Activated T-helper 1 cell treated with anti-CD3 and anti-CD28 coated beads, Interleukin-12 subunit alpha, Interleukin-12 subunit beta, Interleukin-2, Interleukin-4 antibody, amounts not matched to agents 30 ng/mL and 10 ng/mL and 1 ng/mL, durations not matched to agents 14 hours and 24 hours and 36 hours (primary cell): ENCODE measurements at regions of chr15 and their contacts with region 1.

Region 1: GRCh38 chr15:78422571-78423340 is 15.3 kb upstream of the IREB2 start:
- DNase-seq: peak; percentile 32
- H3K4me3 Mint-ChIP-seq: no peak overlapping the region
- H3K27ac Mint-ChIP-seq: no peak overlapping the region
- H3K4me1 Mint-ChIP-seq: peaks cover 12% of the 10 kb centered on the region
- H3K27me3 Mint-ChIP-seq: peaks cover 17% of the 10 kb centered on the region

Region 2: GRCh38 chr15:78308422-78309032 is 114.2 kb before region 1 on chr15:
- intact Hi-C with region 1: loop called (anchors 1 kb)
- DNase-seq: no peak
- H3K4me3 Mint-ChIP-seq: no peak overlapping the region
- H3K27ac Mint-ChIP-seq: no peak overlapping the region
- H3K4me1 Mint-ChIP-seq: no peaks in the 10 kb centered on the region
- H3K27me3 Mint-ChIP-seq: peaks cover 8% of the 10 kb centered on the region

Region 3: GRCh38 chr15:78353093-78353492 is 69.7 kb before region 1 on chr15:
- intact Hi-C with region 1: no loop called
- DNase-seq: no peak
- H3K4me3 Mint-ChIP-seq: no peak overlapping the region
- H3K27ac Mint-ChIP-seq: no peak overlapping the region
- H3K4me1 Mint-ChIP-seq: no peaks in the 10 kb centered on the region
- H3K27me3 Mint-ChIP-seq: peaks cover 4% of the 10 kb centered on the region